ENCODE measurements at regions of chr6 and their contacts with region 1.

Region 1: DNA sequence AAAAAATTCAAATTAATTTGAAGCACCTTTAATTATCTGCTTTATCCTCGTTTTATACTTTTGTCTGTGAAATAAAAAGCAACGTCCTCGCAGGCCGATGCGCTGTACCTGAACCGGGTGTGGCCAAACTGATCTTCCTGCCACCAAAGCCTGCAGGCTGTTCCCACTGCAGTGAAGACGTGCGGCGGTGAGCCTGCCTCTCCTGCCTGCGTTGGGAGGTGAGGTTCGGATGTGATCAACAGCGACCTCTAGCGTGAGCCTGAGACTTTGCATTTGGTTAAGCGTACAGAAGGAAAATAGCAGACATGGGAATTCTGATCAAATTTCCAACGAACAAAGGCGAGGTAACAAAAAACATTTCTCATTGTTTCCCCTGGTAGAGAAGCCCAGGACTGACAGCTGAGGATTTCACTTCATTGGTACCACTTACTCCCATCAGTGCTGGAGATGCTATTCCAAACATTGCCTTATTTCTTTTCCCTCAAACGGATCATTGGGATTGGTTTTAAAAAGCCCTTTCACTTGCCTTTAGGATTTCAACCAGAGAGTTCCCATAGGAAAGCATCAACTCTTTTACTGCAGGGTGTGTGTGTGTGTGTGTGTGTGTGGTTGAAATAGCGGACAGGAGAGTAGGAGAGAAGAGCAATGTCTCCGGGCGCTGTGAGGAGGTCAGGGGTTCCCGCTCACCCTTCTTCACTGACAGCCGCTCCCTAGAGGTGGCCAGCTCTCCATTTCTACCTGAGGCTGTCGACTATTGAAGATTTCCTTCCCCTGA is 56.6 kb upstream of the CCN6 start:
- DNase-seq: peak; percentile 84
- ATAC-seq: peak; percentile 65
- H3K4me3 Mint-ChIP-seq: peak overlapping the region; percentile 55
- H3K27ac Mint-ChIP-seq: peak overlapping the region; percentile 79
- H3K4me1 Mint-ChIP-seq: peaks cover 47% of the 10 kb centered on the region
- H3K27me3 Mint-ChIP-seq: no peaks in the 10 kb centered on the region
- CTCF ChIP-seq: peak; percentile 99

Region 2: DNA sequence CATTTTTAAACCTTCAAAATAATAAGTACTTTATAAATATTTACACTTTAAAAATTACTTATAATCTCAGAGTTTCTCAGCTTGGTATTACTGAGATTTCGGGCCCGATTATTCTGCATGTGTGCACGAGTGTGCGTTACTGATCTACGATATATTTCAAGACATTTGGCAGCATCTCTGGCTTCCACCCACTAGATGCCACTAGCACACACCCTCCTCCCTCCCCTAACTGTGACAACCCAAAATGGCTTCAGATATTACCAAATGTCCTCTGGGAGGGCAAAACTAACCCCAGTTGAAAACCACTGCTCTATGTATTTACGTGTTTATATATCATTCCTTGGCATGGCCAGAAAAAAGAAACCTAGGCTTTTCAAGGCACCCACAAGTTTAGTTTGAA is 219.9 kb before region 1 on chr6:
- CTCF ChIA-PET with region 1: interaction called, 10 read pairs
- POLR2A ChIA-PET with region 1: no interaction called
- intact Hi-C with region 1: no loop called
- DNase-seq: no peak
- ATAC-seq: peak; percentile 47
- H3K4me3 Mint-ChIP-seq: no peak overlapping the region
- H3K27ac Mint-ChIP-seq: peak overlapping the region; percentile 82
- H3K4me1 Mint-ChIP-seq: peaks cover 90% of the 10 kb centered on the region
- H3K27me3 Mint-ChIP-seq: no peaks in the 10 kb centered on the region
- CTCF ChIP-seq: no peak

Region 3: DNA sequence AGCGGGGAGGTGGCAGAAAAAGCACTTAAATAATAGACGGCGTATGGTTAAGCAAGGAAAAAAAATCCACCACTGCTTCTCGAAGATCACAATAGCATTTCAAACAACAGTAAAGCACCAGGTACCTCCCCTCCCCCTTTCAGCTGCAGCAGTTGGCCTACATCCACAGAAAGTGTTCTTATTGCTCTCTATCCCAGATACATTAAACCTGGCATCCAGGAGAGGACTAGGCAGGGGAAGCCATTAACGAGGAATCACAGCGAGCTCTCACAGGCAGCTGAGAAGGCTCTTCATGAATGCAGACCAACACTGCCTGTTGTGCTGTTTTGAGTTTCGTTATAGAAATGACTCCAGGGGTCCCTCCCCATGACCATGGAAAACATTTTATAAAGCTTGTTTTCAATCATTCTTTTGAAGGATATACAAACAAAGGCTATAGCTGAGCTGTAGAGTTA is 135.8 kb before region 1 on chr6:
- CTCF ChIA-PET with region 1: interaction called, 5 read pairs
- POLR2A ChIA-PET with region 1: interaction called, 3 read pairs
- intact Hi-C with region 1: loop called (anchors 2 kb)
- DNase-seq: no peak
- ATAC-seq: peak; percentile 41
- H3K4me3 Mint-ChIP-seq: peak overlapping the region; percentile 35
- H3K27ac Mint-ChIP-seq: peak overlapping the region; percentile 91
- H3K4me1 Mint-ChIP-seq: peaks cover 99% of the 10 kb centered on the region
- H3K27me3 Mint-ChIP-seq: no peaks in the 10 kb centered on the region
- CTCF ChIP-seq: no peak

Region 4: DNA sequence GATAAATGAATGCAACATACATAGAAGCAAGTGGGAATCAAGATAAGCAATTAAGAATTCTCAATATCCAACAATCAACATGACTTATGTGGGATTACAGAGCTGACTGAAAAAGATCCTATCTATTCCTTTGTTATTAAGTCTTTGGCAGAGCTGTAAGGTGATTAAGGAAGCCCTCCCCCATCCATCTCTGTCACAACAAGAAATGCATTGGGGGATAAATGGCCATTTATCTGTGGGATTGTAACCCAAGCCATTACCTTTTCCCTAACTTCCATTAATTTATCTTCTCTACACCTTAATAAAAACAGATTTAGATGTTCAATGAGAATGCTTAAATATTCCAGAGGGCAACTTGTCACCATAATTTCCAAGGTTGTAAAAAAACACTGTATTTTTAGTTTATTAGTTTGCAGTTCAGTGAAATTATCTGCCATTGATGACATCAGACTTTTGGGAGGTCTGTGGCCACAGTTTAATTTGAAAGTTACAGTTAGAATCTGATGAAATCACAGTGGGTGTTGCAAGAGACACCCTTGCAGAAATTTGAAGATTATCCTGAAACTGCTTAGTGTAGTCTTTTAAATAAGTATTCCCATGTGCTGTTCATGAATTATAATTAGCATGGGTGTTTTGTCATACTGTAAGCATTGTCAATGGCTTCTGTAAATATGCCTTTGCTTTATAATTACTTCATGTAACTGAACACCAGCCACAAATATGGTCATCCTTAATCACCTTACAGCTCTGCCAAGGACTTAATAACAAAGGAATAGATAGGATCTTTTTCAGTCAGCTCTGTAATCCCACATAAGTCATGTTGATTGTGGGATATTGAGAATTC is 74.6 kb before region 1 on chr6:
- CTCF ChIA-PET with region 1: no interaction called
- POLR2A ChIA-PET with region 1: no interaction called
- intact Hi-C with region 1: no loop called
- DNase-seq: no peak
- ATAC-seq: no peak
- H3K4me3 Mint-ChIP-seq: no peak overlapping the region
- H3K27ac Mint-ChIP-seq: peak overlapping the region; percentile 71
- H3K4me1 Mint-ChIP-seq: peaks cover 32% of the 10 kb centered on the region
- H3K27me3 Mint-ChIP-seq: no peaks in the 10 kb centered on the region
- CTCF ChIP-seq: no peak

Region 5: GRCh38 chr6:111973118-111973761 is 24.0 kb before region 1 on chr6:
- CTCF ChIA-PET with region 1: interaction called, 15 read pairs
- POLR2A ChIA-PET with region 1: interaction called, 13 read pairs
- intact Hi-C with region 1: no loop called
- DNase-seq: peak; percentile 75
- ATAC-seq: peak; percentile 85
- H3K4me3 Mint-ChIP-seq: peak overlapping the region; percentile 63
- H3K27ac Mint-ChIP-seq: peak overlapping the region; percentile 93
- H3K4me1 Mint-ChIP-seq: peaks cover 64% of the 10 kb centered on the region
- H3K27me3 Mint-ChIP-seq: no peaks in the 10 kb centered on the region
- CTCF ChIP-seq: no peak

Region 6: DNA sequence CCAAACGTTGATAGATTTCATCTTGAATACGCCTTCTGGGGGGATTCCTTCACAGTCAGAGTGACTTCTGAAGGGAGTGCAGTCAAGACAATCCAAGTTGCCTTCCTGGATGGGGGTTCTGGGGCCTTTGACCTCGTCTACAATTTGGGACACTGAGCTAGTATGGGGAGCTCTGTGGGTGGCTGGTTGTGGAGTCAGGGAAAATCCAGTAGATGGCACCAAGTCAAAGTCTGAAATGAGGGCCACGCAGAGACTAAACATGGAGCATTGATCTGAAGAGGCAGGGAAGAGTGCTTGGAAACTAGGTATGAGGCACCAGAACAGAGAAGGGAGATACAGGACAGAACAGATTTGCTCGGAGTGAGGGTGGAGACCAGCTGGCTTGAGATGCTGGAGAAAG is 13.1 kb after region 1 on chr6:
- CTCF ChIA-PET with region 1: interaction called, 35 read pairs
- POLR2A ChIA-PET with region 1: interaction called, 4 read pairs
- intact Hi-C with region 1: no loop called
- DNase-seq: peak; percentile 37
- ATAC-seq: peak; percentile 74
- H3K4me3 Mint-ChIP-seq: no peak overlapping the region
- H3K27ac Mint-ChIP-seq: no peak overlapping the region
- H3K4me1 Mint-ChIP-seq: peaks cover 40% of the 10 kb centered on the region
- H3K27me3 Mint-ChIP-seq: no peaks in the 10 kb centered on the region
- CTCF ChIP-seq: no peak

Measured in activated CD8-positive, alpha-beta T cell treated with anti-CD3 and anti-CD28 coated beads for 36 hours (primary cell).